ENCODE measurements at regions of chr4 and their contacts with region 1.

Region 1: DNA sequence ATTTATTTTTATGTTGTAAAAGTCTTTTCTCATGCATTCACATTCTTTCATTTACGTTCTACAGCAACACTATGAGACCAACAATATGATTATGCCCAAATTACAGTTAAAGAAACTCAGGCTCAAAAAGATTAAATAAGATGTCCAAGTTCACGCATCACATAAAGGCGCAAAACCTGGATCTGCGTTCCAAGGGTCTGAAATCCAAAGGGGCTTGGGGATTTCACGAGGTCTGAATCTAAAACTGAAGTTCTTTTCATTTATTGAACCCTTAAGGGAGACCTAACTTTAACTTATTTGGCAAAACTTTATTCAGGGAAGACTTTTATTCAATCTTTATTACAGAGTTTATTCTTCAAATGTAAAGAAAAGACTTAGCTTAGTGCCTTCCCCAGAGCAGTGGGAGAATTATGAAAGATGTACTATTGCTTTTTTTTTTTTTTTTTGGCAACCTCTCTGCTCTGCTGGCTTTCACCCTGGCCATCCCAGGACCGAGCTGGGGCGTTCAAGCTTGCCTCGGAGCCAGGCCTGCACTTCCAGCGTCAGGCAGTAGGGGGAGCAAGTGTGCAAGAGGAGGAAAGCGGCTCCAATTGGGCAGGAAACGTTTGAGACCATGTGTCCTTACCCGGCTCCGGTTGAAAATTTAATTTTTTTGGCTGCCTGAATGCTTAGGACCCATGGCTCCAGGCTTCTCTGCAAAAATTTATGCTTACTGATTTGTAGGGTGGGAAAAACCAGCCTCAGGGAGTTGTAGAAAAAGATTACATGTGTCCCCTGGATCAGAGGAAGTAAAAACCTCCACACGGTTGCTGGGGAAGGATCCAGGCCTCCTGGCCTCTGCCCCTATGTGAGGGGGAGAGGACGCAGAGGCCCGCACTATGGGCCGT is 344.3 kb upstream of the KLF3 start:
- DNase-seq: peak; percentile 91 to 97 (median 95)
- ATAC-seq: peak; percentile 88 to 93 (median 90)
- H3K4me3 ChIP-seq: peak overlapping the region; percentile 19 to 47 (median 41)
- H3K27ac ChIP-seq: peak overlapping the region; percentile 73 to 81 (median 74)
- H3K4me1 ChIP-seq: peaks cover 0 to 20% (median 8%) of the 10 kb centered on the region in 4 donors
- H3K27me3 ChIP-seq: no peaks in the 10 kb centered on the region
- CTCF ChIP-seq: peak; percentile 98
- POLR2A ChIP-seq: no peak

Region 2: DNA sequence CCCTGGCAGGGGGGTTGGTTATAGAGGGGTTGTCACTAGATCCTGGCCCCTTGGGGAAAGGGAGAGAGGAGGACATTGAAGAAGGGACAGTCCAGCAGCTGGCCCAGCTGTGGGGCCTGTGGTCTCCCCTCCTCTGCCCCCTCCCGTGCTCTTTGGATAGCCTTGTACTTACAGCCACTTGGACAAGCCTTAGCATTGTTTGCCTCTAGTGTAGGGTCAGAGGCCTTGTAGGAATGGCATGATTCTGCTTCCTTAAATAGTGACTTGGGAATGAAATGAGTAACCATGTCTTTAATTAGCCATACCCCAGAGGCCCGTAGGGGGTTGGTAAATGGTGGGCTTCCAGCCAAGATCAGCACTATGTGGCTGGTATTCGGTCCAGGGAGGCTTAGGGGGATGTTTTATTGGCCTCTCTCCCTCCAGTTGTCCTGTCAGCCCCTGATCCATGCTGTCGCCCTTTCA is 129.0 kb before region 1 on chr4:
- intact Hi-C with region 1: no loop called
- DNase-seq: no peak
- ATAC-seq: peak in 3 of 4 donors; percentile 12 to 20 (median 15)
- H3K4me3 ChIP-seq: no peak overlapping the region
- H3K27ac ChIP-seq: no peak overlapping the region
- H3K4me1 ChIP-seq: peaks cover 0 to 11% (median 0%) of the 10 kb centered on the region in 4 donors
- H3K27me3 ChIP-seq: no peaks in the 10 kb centered on the region
- CTCF ChIP-seq: no peak
- POLR2A ChIP-seq: no peak

Region 3: GRCh38 chr4:38663801-38664705 is 344.4 kb after region 1 on chr4 and contains the start of gene KLF3:
- intact Hi-C with region 1: loop called in 1 of 2 experiments (anchors 10 kb)
- DNase-seq: peak; percentile 98
- ATAC-seq: peak; percentile 75 to 90 (median 82)
- H3K4me3 ChIP-seq: peak within 1 kb of the TSS; percentile 82 to 94 (median 91)
- H3K27ac ChIP-seq: peak within 1 kb of the TSS; percentile 95 to 98 (median 96)
- H3K4me1 ChIP-seq: peaks cover 0 to 26% (median 9%) of the 10 kb centered on the region in 4 donors
- H3K27me3 ChIP-seq: no peaks in the 10 kb centered on the region
- CTCF ChIP-seq: no peak
- POLR2A ChIP-seq: peak; percentile 97
- total RNA-seq, gene KLF3: 21.3 to 37.6 (median 26.8) TPM